Motor neuron (in vitro differentiated cells): ENCODE measurements at regions of chr1 and their contacts with region 1.

Region 1: GRCh38 chr1:187655175-187655574 is 826.4 kb downstream of the PLA2G4A start:
- ATAC-seq: no peak
- H3K4me3 ChIP-seq: no peak overlapping the region
- H3K27ac ChIP-seq: no peak overlapping the region
- H3K4me1 ChIP-seq: no peaks in the 10 kb centered on the region

Region 2: DNA sequence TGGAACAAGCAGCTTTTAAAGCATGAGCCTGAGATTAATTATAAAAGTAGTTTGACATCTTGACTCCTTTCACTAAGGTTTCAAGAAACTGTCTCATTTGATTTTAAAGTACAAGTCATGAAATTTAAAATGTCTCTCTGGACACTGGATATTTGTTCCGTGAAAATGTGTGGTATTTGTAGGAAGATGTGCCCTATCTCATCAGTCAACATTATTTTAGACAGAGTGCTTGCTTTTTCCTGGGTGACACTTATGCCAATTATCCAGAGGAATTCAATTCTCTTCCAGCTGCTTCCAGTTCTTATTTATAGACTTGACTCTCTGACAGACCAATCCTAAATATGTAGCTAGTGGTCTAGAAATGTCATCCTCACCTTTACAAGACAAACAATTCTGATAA is 526.0 kb before region 1 on chr1:
- in situ Hi-C with region 1: no loop called
- ATAC-seq: no peak
- H3K4me3 ChIP-seq: no peak overlapping the region
- H3K27ac ChIP-seq: no peak overlapping the region
- H3K4me1 ChIP-seq: no peaks in the 10 kb centered on the region

Region 3: DNA sequence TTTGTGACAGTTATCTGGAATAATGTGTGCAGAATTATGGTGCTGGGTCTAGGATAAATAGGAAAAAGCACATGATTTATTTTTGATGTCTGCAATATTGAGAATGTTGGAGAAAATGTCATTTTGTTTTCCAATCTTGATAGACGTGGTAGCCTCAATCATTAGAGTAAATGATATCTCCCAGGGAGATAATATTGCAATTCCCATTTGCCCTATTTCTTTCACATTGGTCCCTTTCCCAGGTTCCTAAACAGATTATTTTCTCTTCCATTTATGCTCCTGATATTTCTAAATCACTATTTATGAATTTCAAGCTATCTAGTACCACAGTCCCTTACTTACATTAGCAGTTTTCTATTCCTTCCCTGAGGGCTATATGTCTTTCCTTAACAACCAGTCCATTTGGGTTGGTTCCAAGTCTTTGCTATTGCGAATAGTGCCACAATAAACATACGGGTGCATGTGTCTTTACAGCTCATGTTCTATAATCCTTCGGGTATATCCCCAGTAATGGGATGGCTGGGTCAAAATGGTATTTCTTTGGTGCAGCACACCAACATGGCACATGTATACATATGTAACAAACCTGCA is 379.1 kb before region 1 on chr1:
- in situ Hi-C with region 1: loop called in 1 of 9 experiments (anchors 25 kb)
- ATAC-seq: no peak
- H3K4me3 ChIP-seq: no peak overlapping the region
- H3K27ac ChIP-seq: no peak overlapping the region
- H3K4me1 ChIP-seq: peaks cover 0 to 18% of the 10 kb centered on the region in 2 donors